ENCODE measurements at regions of chr12 and their contacts with region 1.

Region 1: GRCh38 chr12:46388427-46389021 is 16.0 kb upstream of the SLC38A2 start:
- DNase-seq: peak; percentile 75
- ATAC-seq: peak; percentile 68
- H3K4me3 ChIP-seq: peak overlapping the region; percentile 37; the same call in 1 of the 2 replicates
- H3K27ac ChIP-seq: peak overlapping the region; percentile 89
- H3K4me1 ChIP-seq: peaks cover 53% of the 10 kb centered on the region
- H3K27me3 ChIP-seq: no peaks in the 10 kb centered on the region
- CTCF ChIP-seq: no peak
- EP300 ChIP-seq: peak; percentile 54 to 93; a peak in 3 of 4 replicates
- POLR2A ChIP-seq: no peak
- RAD21 ChIP-seq: no peak; the same call in 1 of the 2 replicates

Region 2: DNA sequence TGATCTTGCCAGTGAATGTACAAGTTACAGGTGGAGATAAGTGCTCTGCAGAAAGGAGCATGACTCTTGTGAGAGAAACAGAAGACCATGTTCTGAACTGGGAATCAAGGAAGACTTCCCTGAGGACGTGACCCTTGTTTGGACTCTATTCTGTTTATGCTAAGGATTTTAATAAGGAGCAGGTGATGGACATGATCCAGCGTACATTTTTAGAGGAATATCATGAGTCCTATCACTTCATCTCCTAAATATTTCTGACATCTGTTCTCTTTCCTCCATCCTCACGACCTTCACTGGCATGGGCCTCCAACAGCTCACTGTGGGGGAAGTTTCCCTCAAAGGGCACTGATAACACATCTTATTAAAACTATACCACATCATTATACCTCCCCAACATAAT is 111.8 kb before region 1 on chr12:
- CTCF ChIA-PET with region 1: no interaction called
- POLR2A ChIA-PET with region 1: no interaction called
- RAD21 ChIA-PET with region 1: no interaction called
- SMC1A ChIA-PET with region 1: no interaction called
- in situ Hi-C with region 1: no loop called
- intact Hi-C with region 1: no loop called
- DNase-seq: no peak
- ATAC-seq: no peak
- H3K4me3 ChIP-seq: no peak overlapping the region
- H3K27ac ChIP-seq: no peak overlapping the region
- H3K4me1 ChIP-seq: no peaks in the 10 kb centered on the region
- H3K27me3 ChIP-seq: no peaks in the 10 kb centered on the region
- CTCF ChIP-seq: no peak
- EP300 ChIP-seq: no peak
- POLR2A ChIP-seq: no peak
- RAD21 ChIP-seq: no peak

Region 3: GRCh38 chr12:46292755-46293402 is 95.6 kb before region 1 on chr12:
- CTCF ChIA-PET with region 1: no interaction called
- POLR2A ChIA-PET with region 1: no interaction called
- RAD21 ChIA-PET with region 1: no interaction called
- SMC1A ChIA-PET with region 1: no interaction called
- in situ Hi-C with region 1: no loop called
- intact Hi-C with region 1: no loop called
- DNase-seq: no peak
- ATAC-seq: no peak
- H3K4me3 ChIP-seq: no peak overlapping the region
- H3K27ac ChIP-seq: no peak overlapping the region
- H3K4me1 ChIP-seq: no peaks in the 10 kb centered on the region
- H3K27me3 ChIP-seq: no peaks in the 10 kb centered on the region
- CTCF ChIP-seq: peak in 1 of 3 experiments; percentile 7; a peak in 1 of 6 replicates
- EP300 ChIP-seq: no peak
- POLR2A ChIP-seq: no peak
- RAD21 ChIP-seq: peak; percentile 22; the same call in 1 of the 2 replicates

Region 4: GRCh38 chr12:46364777-46365580 is 23.5 kb before region 1 on chr12:
- CTCF ChIA-PET with region 1: interaction called, 13 read pairs
- POLR2A ChIA-PET with region 1: interaction called, 12 read pairs
- RAD21 ChIA-PET with region 1: interaction called, 23 read pairs
- SMC1A ChIA-PET with region 1: interaction called, 30 read pairs
- in situ Hi-C with region 1: no loop called
- intact Hi-C with region 1: no loop called
- DNase-seq: no peak
- ATAC-seq: peak; percentile 37
- H3K4me3 ChIP-seq: peak overlapping the region; percentile 34; the same call in 1 of the 2 replicates
- H3K27ac ChIP-seq: peak overlapping the region; percentile 22
- H3K4me1 ChIP-seq: peaks cover 37% of the 10 kb centered on the region
- H3K27me3 ChIP-seq: no peaks in the 10 kb centered on the region
- CTCF ChIP-seq: no peak
- EP300 ChIP-seq: 0 out of 4 replicates have a peak, but pooled peaks of 1 of the 2 experiments have one; percentile 42
- POLR2A ChIP-seq: no peak
- RAD21 ChIP-seq: no peak

Region 5: GRCh38 chr12:46372544-46373110 is 15.9 kb before region 1 on chr12 and contains the start of gene SLC38A2:
- CTCF ChIA-PET with region 1: interaction called, 13 read pairs
- POLR2A ChIA-PET with region 1: interaction called, 17 read pairs
- RAD21 ChIA-PET with region 1: interaction called, 23 read pairs
- SMC1A ChIA-PET with region 1: interaction called, 28 read pairs
- in situ Hi-C with region 1: no loop called
- intact Hi-C with region 1: loop called (anchors 1 kb)
- DNase-seq: no peak
- ATAC-seq: peak; percentile 90
- H3K4me3 ChIP-seq: peak within 1 kb of the TSS; percentile 84
- H3K27ac ChIP-seq: peak within 1 kb of the TSS; percentile 85
- H3K4me1 ChIP-seq: peaks cover 10% of the 10 kb centered on the region
- H3K27me3 ChIP-seq: no peaks in the 10 kb centered on the region
- CTCF ChIP-seq: no peak
- EP300 ChIP-seq: no peak
- POLR2A ChIP-seq: peak; percentile 99
- RAD21 ChIP-seq: no peak
- polyA plus RNA-seq, gene SLC38A2: 36.2 to 47.3 TPM

Region 6: GRCh38 chr12:46401662-46402061 is 13.1 kb after region 1 on chr12:
- CTCF ChIA-PET with region 1: interaction called, 5 read pairs
- POLR2A ChIA-PET with region 1: interaction called, 37 read pairs
- RAD21 ChIA-PET with region 1: interaction called, 14 read pairs
- SMC1A ChIA-PET with region 1: interaction called, 16 read pairs
- in situ Hi-C with region 1: no loop called
- intact Hi-C with region 1: no loop called
- DNase-seq: no peak
- ATAC-seq: no peak
- H3K4me3 ChIP-seq: no peak overlapping the region
- H3K27ac ChIP-seq: no peak overlapping the region
- H3K4me1 ChIP-seq: peaks cover 15% of the 10 kb centered on the region
- H3K27me3 ChIP-seq: no peaks in the 10 kb centered on the region
- CTCF ChIP-seq: no peak
- EP300 ChIP-seq: no peak
- POLR2A ChIP-seq: no peak
- RAD21 ChIP-seq: no peak

Region 7: GRCh38 chr12:46473634-46474329 is 85.3 kb after region 1 on chr12:
- CTCF ChIA-PET with region 1: interaction called, 13 read pairs
- POLR2A ChIA-PET with region 1: interaction called, 27 read pairs
- RAD21 ChIA-PET with region 1: interaction called, 33 read pairs
- SMC1A ChIA-PET with region 1: interaction called, 56 read pairs
- in situ Hi-C with region 1: no loop called
- intact Hi-C with region 1: loop called (anchors 1 kb)
- DNase-seq: peak; percentile 51
- ATAC-seq: peak; percentile 72
- H3K4me3 ChIP-seq: peak overlapping the region; percentile 30; the same call in 1 of the 2 replicates
- H3K27ac ChIP-seq: peak overlapping the region; percentile 63
- H3K4me1 ChIP-seq: peaks cover 7% of the 10 kb centered on the region; the same call in 1 of the 2 replicates
- H3K27me3 ChIP-seq: no peaks in the 10 kb centered on the region
- CTCF ChIP-seq: no peak
- EP300 ChIP-seq: peak in 1 of 2 experiments; percentile 65; a peak in 2 of 4 replicates
- POLR2A ChIP-seq: no peak
- RAD21 ChIP-seq: no peak

Region 8: DNA sequence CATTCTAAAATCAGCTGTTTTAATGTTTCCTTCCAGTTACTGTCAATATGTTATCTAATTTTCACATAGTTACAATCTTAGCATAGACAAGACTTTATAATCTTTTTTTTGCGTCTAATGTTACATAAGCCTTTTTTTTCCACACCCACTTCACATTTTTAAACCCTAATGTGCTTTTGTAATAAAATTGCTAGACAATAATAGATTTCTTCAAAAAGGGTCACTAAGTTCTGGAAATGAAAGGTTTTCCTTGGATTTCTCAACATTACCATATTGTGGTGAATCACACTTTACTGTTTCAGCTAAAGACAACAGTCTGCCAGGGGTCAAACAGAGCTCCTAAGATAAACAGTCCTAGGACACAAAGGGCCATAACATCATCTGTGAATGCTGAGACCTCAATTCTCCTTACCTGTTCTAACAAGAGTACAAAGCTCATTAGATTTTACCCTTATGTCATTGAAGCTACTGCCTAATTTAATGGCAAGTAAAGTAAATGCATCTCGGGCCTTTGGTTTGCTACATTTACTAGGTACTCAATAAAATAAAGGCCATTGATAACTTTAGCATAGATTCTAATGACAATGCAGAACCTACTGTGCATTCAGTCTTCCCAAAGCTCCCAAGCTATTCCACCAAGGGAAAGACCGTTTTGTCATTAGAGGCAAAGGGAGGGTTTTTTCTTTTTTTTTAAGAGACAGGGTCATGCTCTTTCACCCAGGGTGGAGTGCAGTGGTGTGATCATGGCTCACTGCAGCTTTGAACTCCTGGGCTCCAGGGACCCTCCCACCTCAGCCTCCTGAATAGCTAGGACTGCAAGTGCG is 95.3 kb after region 1 on chr12:
- CTCF ChIA-PET with region 1: no interaction called
- POLR2A ChIA-PET with region 1: no interaction called
- RAD21 ChIA-PET with region 1: interaction called, 4 read pairs
- SMC1A ChIA-PET with region 1: interaction called, 10 read pairs
- in situ Hi-C with region 1: no loop called
- intact Hi-C with region 1: no loop called
- DNase-seq: no peak
- ATAC-seq: no peak
- H3K4me3 ChIP-seq: no peak overlapping the region
- H3K27ac ChIP-seq: no peak overlapping the region
- H3K4me1 ChIP-seq: no peaks in the 10 kb centered on the region
- H3K27me3 ChIP-seq: no peaks in the 10 kb centered on the region
- CTCF ChIP-seq: no peak
- EP300 ChIP-seq: no peak
- POLR2A ChIP-seq: no peak
- RAD21 ChIP-seq: no peak

Region 9: DNA sequence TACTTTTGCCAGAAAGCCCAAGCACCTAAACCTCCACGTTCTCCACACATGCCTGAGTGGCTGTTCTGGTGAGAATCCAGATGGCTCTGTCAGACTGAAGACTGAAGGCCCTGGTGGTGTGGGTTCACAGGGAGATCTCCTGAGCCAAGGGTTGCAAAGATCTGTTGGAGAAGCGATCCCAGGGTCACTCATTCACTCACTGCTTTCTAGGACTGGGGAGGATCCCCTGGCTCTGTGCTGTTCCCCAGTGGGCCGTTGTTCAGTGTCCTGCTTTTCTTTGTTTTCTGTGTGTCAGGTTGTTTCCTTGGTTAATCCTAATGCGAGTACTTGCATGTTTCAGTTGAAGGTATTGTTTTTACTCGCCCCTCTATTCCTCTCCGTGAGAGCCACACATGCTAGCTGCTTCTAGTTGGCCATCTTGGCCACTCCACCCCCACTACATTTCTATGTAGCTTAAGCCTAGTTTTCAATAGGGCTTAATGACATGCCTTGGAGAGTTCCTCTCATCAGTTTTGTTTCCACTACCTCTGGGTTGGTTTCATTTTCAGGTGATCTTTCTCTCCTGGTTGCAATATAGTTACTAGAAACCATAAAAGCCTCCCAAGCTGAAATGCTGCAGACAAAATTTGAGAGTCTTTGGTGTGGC is 128.5 kb after region 1 on chr12:
- CTCF ChIA-PET with region 1: interaction called, 7 read pairs
- POLR2A ChIA-PET with region 1: interaction called, 8 read pairs
- RAD21 ChIA-PET with region 1: interaction called, 14 read pairs
- SMC1A ChIA-PET with region 1: interaction called, 41 read pairs
- in situ Hi-C with region 1: no loop called
- intact Hi-C with region 1: loop called (anchors 2 kb)
- DNase-seq: peak; percentile 85
- ATAC-seq: peak; percentile 96
- H3K4me3 ChIP-seq: peak overlapping the region; percentile 18; the same call in 1 of the 2 replicates
- H3K27ac ChIP-seq: peak overlapping the region; percentile 97
- H3K4me1 ChIP-seq: peaks cover 30% of the 10 kb centered on the region
- H3K27me3 ChIP-seq: no peaks in the 10 kb centered on the region
- CTCF ChIP-seq: no peak
- EP300 ChIP-seq: peak in 1 of 2 experiments; percentile 48; a peak in 1 of 4 replicates
- POLR2A ChIP-seq: no peak
- RAD21 ChIP-seq: peak; percentile 24